PC-3 (cell line): ENCODE measurements at regions of chr3 and their contacts with region 1.

Region 1: GRCh38 chr3:49469936-49470713 is at the start of gene DAG1:
- DNase-seq: peak; percentile 98
- ATAC-seq: peak; percentile 86
- H3K4me3 ChIP-seq: peak within 1 kb of the TSS; percentile 72
- H3K27ac ChIP-seq: peak within 1 kb of the TSS; percentile 78
- H3K4me1 ChIP-seq: peaks cover 20% of the 10 kb centered on the region
- H3K27me3 ChIP-seq: no peaks in the 10 kb centered on the region
- CTCF ChIP-seq: no peak
- total RNA-seq, gene DAG1: 111 and 114 TPM in 2 replicates

Region 2: GRCh38 chr3:49411968-49412631 is 58.0 kb before region 1 on chr3 and contains the starts of genes RHOA and TCTA:
- CTCF ChIA-PET with region 1: no interaction called
- POLR2A ChIA-PET with region 1: interaction called, 6 read pairs
- intact Hi-C with region 1: loop called (anchors 1 kb)
- DNase-seq: peak; percentile 100
- ATAC-seq: peak; percentile 93
- H3K4me3 ChIP-seq: peak within 1 kb of the TSS; percentile 85
- H3K27ac ChIP-seq: peak within 1 kb of the TSS; percentile 66
- H3K4me1 ChIP-seq: peaks cover 32% of the 10 kb centered on the region
- H3K27me3 ChIP-seq: no peaks in the 10 kb centered on the region
- CTCF ChIP-seq: no peak
- total RNA-seq, gene RHOA: 278 and 292 TPM in 2 replicates
- total RNA-seq, gene TCTA: 23.7 and 25.4 TPM in 2 replicates

Region 3: DNA sequence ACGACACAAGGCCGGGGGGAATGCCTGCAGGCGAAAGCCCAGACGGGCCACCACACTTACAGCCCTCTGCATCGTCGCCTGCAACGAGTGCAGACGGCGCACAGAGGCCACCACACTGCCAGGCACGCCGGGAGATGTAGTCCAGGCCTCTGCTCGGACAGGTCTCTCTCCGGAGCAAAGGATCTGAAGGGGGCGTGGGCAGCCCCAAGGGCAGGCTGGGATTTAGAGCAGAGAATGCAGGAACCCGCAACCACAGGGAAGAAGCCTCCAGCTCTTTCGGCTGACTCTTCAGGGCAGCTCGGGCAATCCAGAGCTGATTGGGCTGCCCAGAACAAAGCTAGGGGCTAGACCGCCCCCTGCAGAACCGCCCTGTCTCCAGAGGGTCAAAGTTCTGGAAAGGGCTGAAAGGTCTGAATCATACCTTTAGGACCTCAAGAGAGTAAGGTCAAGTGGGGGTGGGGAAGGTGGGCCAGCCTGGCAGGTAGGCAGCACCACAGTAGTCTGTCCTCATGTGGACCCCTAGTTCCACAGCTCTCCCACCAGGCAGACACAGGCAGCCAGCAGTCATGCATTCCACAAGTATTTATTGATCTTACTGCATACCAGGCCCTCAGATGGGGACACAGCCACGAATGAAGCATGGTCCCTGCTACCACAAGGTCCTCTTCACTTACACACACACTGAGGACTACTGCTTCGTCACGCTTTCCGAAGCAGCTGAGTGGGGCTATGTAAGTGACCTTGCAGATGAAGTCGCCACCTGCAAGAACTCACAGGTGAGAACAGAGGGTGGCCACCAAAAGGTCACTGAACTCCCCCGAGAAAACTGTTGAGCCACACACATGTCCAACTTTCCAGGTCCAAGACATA is 47.5 kb before region 1 on chr3 and contains the start of gene AMT:
- CTCF ChIA-PET with region 1: no interaction called
- POLR2A ChIA-PET with region 1: interaction called, 23 read pairs
- intact Hi-C with region 1: no loop called
- DNase-seq: no peak
- ATAC-seq: no peak
- H3K4me3 ChIP-seq: no peak within 1 kb of the TSS
- H3K27ac ChIP-seq: peak within 1 kb of the TSS; percentile 70
- H3K4me1 ChIP-seq: peaks cover 17% of the 10 kb centered on the region
- H3K27me3 ChIP-seq: no peaks in the 10 kb centered on the region
- CTCF ChIP-seq: no peak
- total RNA-seq, gene AMT: 1.6 and 1.8 TPM in 2 replicates

Region 4: DNA sequence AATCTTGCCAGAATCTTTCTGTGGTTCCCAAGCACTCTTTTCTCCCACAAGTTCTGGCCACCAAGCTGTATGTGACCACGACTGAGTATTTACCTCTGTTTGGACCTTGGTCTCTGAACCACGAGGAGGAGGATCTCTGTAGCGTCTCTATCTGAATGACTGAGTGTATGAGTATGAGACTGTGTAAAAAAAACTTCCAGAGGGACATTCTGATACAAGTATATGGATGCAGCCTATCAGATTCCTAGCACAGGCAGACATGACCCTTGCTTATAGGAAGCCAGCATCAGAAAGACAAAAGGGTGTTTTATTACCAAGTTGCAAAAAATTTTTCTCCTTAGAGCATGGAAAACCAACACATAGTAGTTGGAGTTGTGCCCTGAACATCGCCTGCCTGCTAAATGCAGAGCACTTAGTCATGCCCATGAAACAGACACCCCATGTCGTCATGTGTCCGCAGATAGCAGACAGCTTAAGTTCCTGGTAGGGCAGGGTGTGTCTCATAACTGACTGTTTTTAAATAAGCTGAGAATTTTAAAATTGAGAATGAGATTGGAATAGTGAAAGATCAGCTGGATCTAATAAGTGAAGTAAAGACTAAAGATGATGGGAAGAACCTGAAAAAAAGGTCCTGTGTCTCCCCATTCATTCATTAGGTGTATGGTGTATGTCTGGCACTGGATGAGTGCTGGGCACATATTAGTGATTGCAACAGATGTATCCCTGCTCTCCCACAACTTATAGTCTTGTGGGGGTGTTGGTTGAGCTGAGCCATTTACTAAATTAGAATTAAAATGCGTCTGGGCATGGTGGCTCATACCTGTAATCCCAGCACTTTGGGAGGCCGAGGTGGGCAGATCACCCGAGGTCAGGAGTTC is 30.8 kb after region 1 on chr3:
- CTCF ChIA-PET with region 1: no interaction called
- POLR2A ChIA-PET with region 1: interaction called, 13 read pairs
- intact Hi-C with region 1: no loop called
- DNase-seq: peak; percentile 95
- ATAC-seq: peak; percentile 98
- H3K4me3 ChIP-seq: peak overlapping the region; percentile 14
- H3K27ac ChIP-seq: peak overlapping the region; percentile 93
- H3K4me1 ChIP-seq: peaks cover 20% of the 10 kb centered on the region
- H3K27me3 ChIP-seq: no peaks in the 10 kb centered on the region
- CTCF ChIP-seq: no peak

Region 5: GRCh38 chr3:49519916-49520385 is 49.8 kb after region 1 on chr3:
- CTCF ChIA-PET with region 1: no interaction called
- POLR2A ChIA-PET with region 1: no interaction called
- intact Hi-C with region 1: loop called (anchors 10 kb)
- DNase-seq: no peak
- ATAC-seq: no peak
- H3K4me3 ChIP-seq: no peak overlapping the region
- H3K27ac ChIP-seq: no peak overlapping the region
- H3K4me1 ChIP-seq: no peaks in the 10 kb centered on the region
- H3K27me3 ChIP-seq: no peaks in the 10 kb centered on the region
- CTCF ChIP-seq: no peak

Region 6: GRCh38 chr3:49607796-49608195 is 137.7 kb after region 1 on chr3:
- CTCF ChIA-PET with region 1: no interaction called
- POLR2A ChIA-PET with region 1: no interaction called
- intact Hi-C with region 1: no loop called
- DNase-seq: no peak
- ATAC-seq: no peak
- H3K4me3 ChIP-seq: no peak overlapping the region
- H3K27ac ChIP-seq: no peak overlapping the region
- H3K4me1 ChIP-seq: peaks cover 8% of the 10 kb centered on the region
- H3K27me3 ChIP-seq: no peaks in the 10 kb centered on the region
- CTCF ChIP-seq: peak; percentile 51; the same call in 1 of the 2 replicates

Region 7: GRCh38 chr3:49673715-49674496 is 203.8 kb after region 1 on chr3 and contains the start of gene APEH:
- CTCF ChIA-PET with region 1: no interaction called
- POLR2A ChIA-PET with region 1: no interaction called
- intact Hi-C with region 1: loop called (anchors 5 kb)
- DNase-seq: peak; percentile 98
- ATAC-seq: peak; percentile 81
- H3K4me3 ChIP-seq: peak within 1 kb of the TSS; percentile 88
- H3K27ac ChIP-seq: peak within 1 kb of the TSS; percentile 89
- H3K4me1 ChIP-seq: peaks cover 26% of the 10 kb centered on the region
- H3K27me3 ChIP-seq: no peaks in the 10 kb centered on the region
- CTCF ChIP-seq: no peak
- total RNA-seq, gene APEH: 236 and 246 TPM in 2 replicates

Region 8: DNA sequence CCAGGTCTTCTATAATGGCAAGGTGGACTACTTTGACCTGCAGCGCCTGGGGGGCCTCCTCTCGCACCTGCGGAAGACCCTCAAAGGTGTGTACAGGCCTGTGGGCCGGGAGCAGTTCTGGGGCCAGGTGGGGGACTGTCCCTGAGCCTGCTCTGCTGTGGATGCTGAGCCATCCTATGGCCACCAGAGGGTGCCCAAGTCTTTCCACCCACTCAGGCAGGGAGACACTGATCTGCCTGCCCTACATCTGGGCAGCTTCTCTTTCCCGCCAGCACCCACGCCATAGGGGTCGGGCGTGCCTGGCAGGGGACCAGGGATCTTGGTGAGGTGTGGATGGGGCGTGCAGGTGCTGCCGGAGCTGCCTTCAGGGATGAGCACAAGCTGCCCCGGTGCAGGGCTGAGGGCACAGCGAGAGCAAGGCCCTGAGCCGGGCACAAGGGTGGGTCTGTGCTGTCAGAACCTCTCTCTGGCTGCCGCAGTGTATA is 233.4 kb after region 1 on chr3:
- CTCF ChIA-PET with region 1: interaction called, 10 read pairs
- POLR2A ChIA-PET with region 1: no interaction called
- intact Hi-C with region 1: no loop called
- DNase-seq: peak; percentile 81
- ATAC-seq: peak; percentile 88
- H3K4me3 ChIP-seq: no peak overlapping the region
- H3K27ac ChIP-seq: no peak overlapping the region
- H3K4me1 ChIP-seq: no peaks in the 10 kb centered on the region
- H3K27me3 ChIP-seq: no peaks in the 10 kb centered on the region
- CTCF ChIP-seq: peak; percentile 85

Region 9: GRCh38 chr3:49723628-49724551 is 253.8 kb after region 1 on chr3 and contains the start of gene GMPPB:
- CTCF ChIA-PET with region 1: no interaction called
- POLR2A ChIA-PET with region 1: no interaction called
- intact Hi-C with region 1: no loop called
- DNase-seq: peak; percentile 99
- ATAC-seq: peak; percentile 78
- H3K4me3 ChIP-seq: peak within 1 kb of the TSS; percentile 98
- H3K27ac ChIP-seq: peak within 1 kb of the TSS; percentile 79
- H3K4me1 ChIP-seq: peaks cover 20% of the 10 kb centered on the region
- H3K27me3 ChIP-seq: no peaks in the 10 kb centered on the region
- CTCF ChIP-seq: no peak
- total RNA-seq, gene GMPPB: 69.5 and 83.9 TPM in 2 replicates